ENCODE measurements at regions of chr6 and their contacts with region 1.

Region 1: GRCh38 chr6:116969211-116969863 is 92.3 kb downstream of the RFX6 start:
- DNase-seq: peak; percentile 50
- H3K4me3 Mint-ChIP-seq: no peak overlapping the region
- H3K27ac Mint-ChIP-seq: no peak overlapping the region
- H3K4me1 Mint-ChIP-seq: peaks cover 7% of the 10 kb centered on the region
- H3K27me3 Mint-ChIP-seq: no peaks in the 10 kb centered on the region
- CTCF ChIP-seq: peak; percentile 28

Region 2: DNA sequence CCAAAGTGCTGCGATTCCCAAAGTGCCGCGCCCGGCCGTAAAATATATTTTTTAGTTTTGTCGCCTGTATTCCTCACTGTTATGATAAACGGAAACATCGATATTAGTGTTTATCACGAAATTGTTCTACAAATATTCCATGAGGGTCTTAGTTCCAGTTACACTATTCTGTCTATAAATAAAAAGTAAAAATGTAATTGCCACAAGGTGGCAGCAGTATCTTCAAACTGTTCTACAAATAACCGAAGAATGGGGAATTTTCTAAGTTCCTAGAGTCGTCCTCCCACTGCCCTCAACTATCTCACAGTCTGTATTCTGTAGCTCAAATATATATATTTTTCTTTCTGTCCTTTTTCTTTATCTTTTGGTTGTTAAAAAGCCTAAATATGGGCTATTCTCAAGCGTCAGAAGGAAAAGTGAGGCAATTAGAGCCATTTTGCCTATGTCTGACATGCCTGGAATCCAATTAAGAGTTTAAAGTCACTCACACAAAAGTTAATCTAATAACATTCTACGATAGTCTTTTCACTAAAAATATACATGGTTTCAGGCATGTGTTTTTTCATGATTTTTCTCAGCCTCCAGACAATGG is 189.7 kb before region 1 on chr6:
- CTCF ChIA-PET with region 1: no interaction called
- intact Hi-C with region 1: loop called (anchors 2 kb)
- DNase-seq: peak; percentile 2
- H3K4me3 Mint-ChIP-seq: no peak overlapping the region
- H3K27ac Mint-ChIP-seq: no peak overlapping the region
- H3K4me1 Mint-ChIP-seq: no peaks in the 10 kb centered on the region
- H3K27me3 Mint-ChIP-seq: no peaks in the 10 kb centered on the region
- CTCF ChIP-seq: no peak

Region 3: GRCh38 chr6:116881236-116881635 is 88.1 kb before region 1 on chr6:
- CTCF ChIA-PET with region 1: interaction called, 15 read pairs
- intact Hi-C with region 1: loop called (anchors 1 kb)
- DNase-seq: no peak
- H3K4me3 Mint-ChIP-seq: no peak overlapping the region
- H3K27ac Mint-ChIP-seq: no peak overlapping the region
- H3K4me1 Mint-ChIP-seq: no peaks in the 10 kb centered on the region
- H3K27me3 Mint-ChIP-seq: peaks cover 7% of the 10 kb centered on the region
- CTCF ChIP-seq: no peak

Region 4: DNA sequence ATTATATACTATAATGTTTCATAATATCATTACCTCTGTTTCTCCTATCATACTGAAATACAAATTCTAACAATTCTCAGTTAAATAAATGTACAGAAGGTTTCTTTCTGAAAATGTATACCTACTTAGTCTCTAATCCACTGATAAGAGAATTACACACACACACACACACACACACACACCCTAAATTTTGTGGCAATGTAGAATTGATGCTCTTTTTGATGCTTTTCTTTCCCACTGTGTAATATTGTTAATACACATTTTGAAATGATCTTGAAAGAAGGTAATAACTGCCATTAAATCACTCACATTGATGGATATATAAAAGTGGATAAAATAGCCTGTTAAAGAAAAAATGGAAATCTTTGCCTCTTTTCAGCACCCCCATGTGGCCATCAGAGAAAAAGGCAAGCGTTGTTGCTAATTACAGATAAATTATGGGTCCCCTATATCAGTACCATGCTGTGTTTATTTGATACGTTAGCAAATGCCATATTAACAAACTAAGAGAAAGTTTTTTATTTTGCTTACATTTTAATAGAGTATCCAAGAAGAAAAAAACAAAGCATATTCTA is 219.4 kb after region 1 on chr6:
- CTCF ChIA-PET with region 1: no interaction called
- intact Hi-C with region 1: loop called (anchors 2 kb)
- DNase-seq: no peak
- H3K4me3 Mint-ChIP-seq: no peak overlapping the region
- H3K27ac Mint-ChIP-seq: no peak overlapping the region
- H3K4me1 Mint-ChIP-seq: no peaks in the 10 kb centered on the region
- H3K27me3 Mint-ChIP-seq: no peaks in the 10 kb centered on the region
- CTCF ChIP-seq: peak; percentile 52

Region 5: DNA sequence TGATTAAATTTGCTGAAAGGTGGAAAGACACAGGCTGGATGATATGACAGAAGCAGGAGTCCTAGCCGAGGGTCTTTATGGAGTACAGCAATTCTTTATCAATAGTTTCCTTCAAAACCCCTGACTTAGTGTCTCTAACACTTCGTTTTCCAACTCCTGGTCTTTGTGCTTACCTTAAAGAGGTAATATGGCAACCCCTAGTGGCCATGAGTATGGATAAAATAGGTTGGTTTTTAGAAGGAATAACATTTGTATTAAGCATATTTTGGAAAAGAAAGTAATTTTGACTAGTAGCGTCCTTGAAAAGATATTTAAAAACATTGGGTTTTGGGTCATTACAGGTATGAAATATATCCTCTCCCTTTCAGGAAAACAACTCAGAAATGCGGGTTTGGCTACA is 347.9 kb after region 1 on chr6:
- CTCF ChIA-PET with region 1: interaction called, 3 read pairs
- intact Hi-C with region 1: loop called (anchors 1 kb)
- DNase-seq: peak; percentile 10
- H3K4me3 Mint-ChIP-seq: no peak overlapping the region
- H3K27ac Mint-ChIP-seq: no peak overlapping the region
- H3K4me1 Mint-ChIP-seq: no peaks in the 10 kb centered on the region
- H3K27me3 Mint-ChIP-seq: no peaks in the 10 kb centered on the region
- CTCF ChIP-seq: peak; percentile 36

Region 6: DNA sequence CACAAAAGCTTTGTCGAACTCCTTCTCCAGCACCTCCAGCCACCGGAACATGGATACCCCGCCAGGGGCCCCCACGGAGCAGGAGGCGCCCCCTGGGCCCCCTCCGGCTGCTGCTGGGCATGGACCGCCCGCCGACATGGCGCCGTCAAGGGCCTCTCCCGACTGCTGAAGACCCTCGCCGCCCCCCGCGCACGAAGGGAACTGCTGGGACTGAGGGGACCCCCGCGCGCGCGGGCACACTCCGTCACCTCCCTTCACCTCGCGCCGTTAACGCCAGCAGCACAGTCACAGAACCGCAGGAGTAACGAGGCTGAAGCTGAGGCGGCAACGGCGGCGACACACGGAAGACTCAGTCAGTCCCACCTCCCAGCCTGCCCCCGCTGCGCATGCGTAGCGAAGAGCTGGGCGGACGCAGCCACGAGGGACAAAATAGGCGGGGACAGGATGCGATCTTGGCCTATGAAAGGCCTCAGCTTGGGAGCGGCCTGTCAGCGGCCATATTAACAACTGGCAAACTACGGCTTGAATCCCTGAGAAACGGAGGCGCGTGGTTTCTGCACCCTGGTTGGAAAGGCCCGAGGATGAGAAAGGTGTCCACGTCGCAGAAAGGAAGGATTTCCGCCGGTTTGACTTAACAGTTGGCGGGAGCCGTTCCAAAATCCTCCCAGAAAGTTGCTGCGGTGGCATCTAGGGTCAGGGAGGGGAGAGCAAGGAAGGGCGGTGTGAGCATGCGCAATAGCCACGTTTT is 633.0 kb after region 1 on chr6 and contains the start of gene GOPC:
- CTCF ChIA-PET with region 1: no interaction called
- intact Hi-C with region 1: loop called (anchors 5 kb)
- DNase-seq: peak; percentile 95
- H3K4me3 Mint-ChIP-seq: peak within 1 kb of the TSS; percentile 99
- H3K27ac Mint-ChIP-seq: peak within 1 kb of the TSS; percentile 98
- H3K4me1 Mint-ChIP-seq: peaks cover 19% of the 10 kb centered on the region
- H3K27me3 Mint-ChIP-seq: no peaks in the 10 kb centered on the region
- CTCF ChIP-seq: peak; percentile 30
- total RNA-seq, gene GOPC: 28.8 and 33.5 TPM in 2 replicates

Region 7: GRCh38 chr6:117829594-117830319 is 860.4 kb after region 1 on chr6:
- CTCF ChIA-PET with region 1: no interaction called
- intact Hi-C with region 1: loop called (anchors 10 kb)
- DNase-seq: peak; percentile 33
- H3K4me3 Mint-ChIP-seq: peak overlapping the region; percentile 55
- H3K27ac Mint-ChIP-seq: no peak overlapping the region
- H3K4me1 Mint-ChIP-seq: peaks cover 6% of the 10 kb centered on the region
- H3K27me3 Mint-ChIP-seq: no peaks in the 10 kb centered on the region
- CTCF ChIP-seq: no peak

Measured in Calu3 (cell line).